HCT116 (cell line): ENCODE measurements at regions of chr14 and their contacts with region 1.

Region 1: DNA sequence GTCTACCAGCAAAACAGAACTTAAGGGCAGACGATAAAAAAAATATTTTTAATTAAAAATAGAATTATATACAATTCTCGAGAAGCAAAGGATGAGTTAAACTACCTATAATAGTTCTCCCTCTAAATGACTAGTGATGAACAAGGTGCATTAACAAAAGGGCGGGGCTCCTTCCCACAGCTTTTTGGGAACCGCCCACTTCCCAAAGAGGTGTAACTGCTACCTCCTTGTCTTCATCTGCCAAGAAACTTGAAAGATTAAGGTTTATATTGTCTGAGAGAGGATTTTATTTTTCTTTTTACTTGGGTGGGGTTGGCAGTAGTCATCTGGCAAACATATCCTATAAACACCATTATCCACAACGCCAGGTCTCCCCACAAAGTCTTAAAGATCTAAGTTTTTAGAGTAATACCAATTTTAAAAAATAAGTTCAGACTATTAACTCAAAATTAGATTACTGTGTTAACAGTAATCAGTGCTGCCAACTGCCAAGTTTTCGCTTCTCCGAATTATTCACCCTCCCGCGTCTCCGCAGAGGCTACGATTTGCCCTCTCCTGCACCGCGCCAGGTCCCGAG is 931 bp downstream of the RALGAPA1 start:
- DNase-seq: no peak
- ATAC-seq: peak; percentile 25; the same call in 1 of the 2 replicates
- H3K4me3 ChIP-seq: peak overlapping the region; percentile 81 to 82
- H3K27ac ChIP-seq: peak overlapping the region; percentile 89
- H3K4me1 ChIP-seq: peaks cover 8 to 10% of the 10 kb centered on the region in 2 experiments; a peak in 3 of 4 replicates
- H3K27me3 ChIP-seq: no peaks in the 10 kb centered on the region
- CTCF ChIP-seq: no peak
- POLR2A ChIP-seq: no peak
- RAD21 ChIP-seq: no peak

Region 2: DNA sequence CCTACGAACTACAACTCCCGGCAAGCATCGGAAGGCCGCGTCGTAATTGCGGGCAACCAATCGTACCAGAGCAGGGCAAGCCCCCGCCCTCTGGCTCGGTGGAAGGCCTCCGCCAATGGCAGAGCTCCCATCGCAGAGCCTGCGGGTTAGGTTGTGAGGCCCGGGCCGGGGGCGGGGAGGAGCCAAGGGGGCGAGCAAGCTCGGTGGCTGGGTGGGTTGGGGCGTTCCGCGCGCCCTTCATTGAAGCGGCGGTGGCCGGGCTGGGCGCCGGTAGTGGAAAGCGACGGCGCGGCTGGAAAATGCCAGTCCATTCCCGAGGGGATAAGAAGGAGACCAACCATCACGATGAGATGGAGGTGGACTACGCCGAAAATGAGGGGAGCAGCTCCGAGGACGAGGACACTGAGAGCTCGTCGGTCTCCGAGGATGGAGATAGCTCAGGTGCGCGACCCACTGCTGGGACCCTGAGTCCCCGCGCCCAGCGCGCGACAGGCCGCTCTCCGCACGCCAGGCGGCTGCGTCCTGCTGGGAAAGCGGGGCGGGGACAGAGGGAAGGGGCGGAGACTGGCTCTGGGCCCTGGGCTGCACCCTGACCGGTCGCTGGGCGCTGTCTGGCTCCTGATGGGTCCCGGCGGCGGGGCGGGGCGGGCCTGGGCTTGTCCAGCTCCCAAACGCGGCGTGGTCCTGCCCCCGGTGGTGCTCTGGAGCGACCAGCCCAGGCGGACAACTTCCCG is 18.2 kb after region 1 on chr14 and contains the start of gene BRMS1L:
- CTCF ChIA-PET with region 1: interaction called, 7 read pairs
- POLR2A ChIA-PET with region 1: interaction called, 10 read pairs
- RAD21 ChIA-PET with region 1: no interaction called
- intact Hi-C with region 1: no loop called
- DNase-seq: peak; percentile 95
- ATAC-seq: peak; percentile 94
- H3K4me3 ChIP-seq: peak within 1 kb of the TSS; percentile 74 to 82
- H3K27ac ChIP-seq: peak within 1 kb of the TSS; percentile 91
- H3K4me1 ChIP-seq: peaks cover 4 to 20% of the 10 kb centered on the region in 2 experiments
- H3K27me3 ChIP-seq: no peaks in the 10 kb centered on the region
- CTCF ChIP-seq: 0 out of 6 replicates have a peak, but pooled peaks of 1 of the 3 experiments have one; percentile 14
- POLR2A ChIP-seq: peak; percentile 90
- RAD21 ChIP-seq: no peak
- total RNA-seq, gene BRMS1L: 6.2 TPM